ENCODE measurements at regions of chr3 and their contacts with region 1.

Region 1: GRCh38 chr3:108620003-108620704 is 30.6 kb downstream of the DZIP3 start:
- DNase-seq: no peak
- H3K4me3 ChIP-seq: no peak overlapping the region
- H3K27ac ChIP-seq: no peak overlapping the region
- H3K4me1 ChIP-seq: no peaks in the 10 kb centered on the region
- H3K27me3 ChIP-seq: no peaks in the 10 kb centered on the region
- CTCF ChIP-seq: no peak

Region 2: DNA sequence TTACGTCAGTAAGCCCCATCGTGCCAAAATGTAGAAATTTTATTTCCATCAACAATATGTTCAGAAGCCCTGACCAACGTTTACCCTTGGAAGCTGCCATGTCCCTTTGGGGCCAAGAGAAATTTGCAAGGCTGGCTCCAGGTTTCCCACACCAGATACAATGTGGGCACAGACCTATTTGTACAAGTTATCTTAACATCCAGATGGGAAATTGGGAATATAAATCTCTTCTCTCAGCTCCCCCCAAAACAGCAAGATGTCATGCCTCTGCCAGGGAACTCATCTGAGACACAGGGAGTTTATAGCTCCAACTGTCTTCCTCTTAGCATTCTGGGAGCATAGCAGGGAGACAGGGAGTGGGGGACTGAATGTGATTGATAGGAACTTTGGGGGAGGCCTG is 705.5 kb after region 1 on chr3:
- CTCF ChIA-PET with region 1: no interaction called
- POLR2A ChIA-PET with region 1: interaction called, 11 read pairs
- intact Hi-C with region 1: no loop called
- DNase-seq: no peak
- H3K4me3 ChIP-seq: no peak overlapping the region
- H3K27ac ChIP-seq: no peak overlapping the region
- H3K4me1 ChIP-seq: no peaks in the 10 kb centered on the region
- H3K27me3 ChIP-seq: peaks cover 39% of the 10 kb centered on the region
- CTCF ChIP-seq: no peak